RWPE1 (cell line): ENCODE measurements at regions of chr11 and their contacts with region 1.

Region 1: DNA sequence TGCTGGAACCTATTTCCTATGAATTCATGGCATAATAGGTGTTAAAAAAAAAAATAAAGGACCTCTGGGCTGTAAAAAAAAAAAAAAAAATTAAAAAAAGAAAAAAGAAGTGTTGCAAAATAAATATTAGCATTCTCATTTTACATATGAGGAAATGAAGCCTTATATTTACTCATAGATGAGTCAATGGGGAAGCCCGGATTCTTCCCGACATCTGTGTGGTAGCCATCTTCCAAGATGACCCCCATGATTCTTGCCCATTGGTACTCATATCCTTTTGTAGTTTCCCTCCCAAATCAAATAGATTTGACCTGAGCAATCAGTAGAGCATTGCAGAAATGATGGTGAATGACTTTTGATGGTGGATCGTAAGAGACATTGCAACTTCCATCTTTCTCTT is 3.0 kb upstream of the SWAP70 start:
- DNase-seq: peak; percentile 20
- H3K27ac ChIP-seq: no peak overlapping the region
- CTCF ChIP-seq: no peak

Region 2: DNA sequence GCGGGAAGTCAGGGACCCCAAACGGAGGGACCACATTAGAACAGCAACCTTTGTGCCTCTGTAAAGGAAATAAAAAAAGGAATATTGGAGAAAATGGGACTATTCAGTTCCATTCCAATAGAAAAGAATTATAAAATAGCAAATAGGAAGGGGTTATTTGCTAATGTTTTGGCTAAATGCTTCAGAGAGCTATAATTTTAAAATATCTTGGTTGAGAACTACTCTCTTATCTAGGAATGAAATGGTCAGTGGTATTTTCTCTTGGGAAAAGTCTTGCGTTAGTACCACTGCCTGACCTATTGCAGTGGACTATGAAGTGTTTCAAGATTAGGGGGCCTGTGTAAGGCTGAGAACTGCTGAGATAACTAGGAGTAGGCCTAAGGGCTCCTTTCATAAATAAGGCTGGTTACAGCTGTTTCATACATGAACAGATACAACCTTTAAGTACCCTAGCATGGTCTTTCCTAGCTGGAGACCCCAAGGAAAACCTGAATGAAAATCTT is 94.3 kb before region 1 on chr11:
- CTCF ChIA-PET with region 1: no interaction called
- POLR2A ChIA-PET with region 1: no interaction called
- DNase-seq: no peak
- H3K27ac ChIP-seq: no peak overlapping the region
- CTCF ChIP-seq: no peak

Region 3: DNA sequence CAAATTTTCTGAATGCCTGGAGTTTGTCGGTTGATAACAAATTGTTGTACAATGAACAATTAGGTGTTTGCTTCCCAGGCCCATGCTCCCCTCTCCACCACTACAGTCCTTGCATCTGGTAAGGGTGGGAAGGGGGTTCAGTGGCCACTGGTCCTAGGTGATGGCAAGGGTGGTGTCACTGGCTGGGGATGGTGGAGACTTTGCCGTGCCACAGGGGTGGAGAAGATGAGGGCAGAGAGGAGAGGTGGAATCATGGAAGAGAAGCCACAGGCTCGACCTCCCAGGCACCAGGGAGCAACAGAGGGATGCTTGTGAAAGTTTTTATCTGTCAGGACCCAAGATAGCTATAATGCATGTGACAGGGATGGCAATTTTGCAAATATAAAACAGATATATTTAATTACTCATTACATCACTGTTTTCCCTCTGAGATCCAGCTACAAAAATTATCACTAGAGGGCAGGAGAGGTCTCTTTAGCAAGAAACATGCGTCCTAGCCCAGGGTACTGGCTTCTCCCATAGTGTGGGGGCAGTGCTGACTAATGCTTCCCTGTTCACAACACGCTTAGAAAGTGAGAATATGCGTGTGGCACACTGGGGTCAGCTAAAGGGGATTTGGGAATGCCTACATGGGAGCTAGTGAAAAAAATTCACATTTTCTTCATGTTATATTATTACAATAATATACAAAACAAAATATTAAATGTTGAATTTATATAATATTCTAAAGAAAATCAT is 745.1 kb after region 1 on chr11:
- CTCF ChIA-PET with region 1: interaction called, 11 read pairs
- POLR2A ChIA-PET with region 1: no interaction called
- DNase-seq: peak; percentile 82
- H3K27ac ChIP-seq: no peak overlapping the region
- CTCF ChIP-seq: peak; percentile 82